Transverse colon (tissue), 4 donors: ENCODE measurements at regions of chr9 and their contacts with region 1.

Region 1: DNA sequence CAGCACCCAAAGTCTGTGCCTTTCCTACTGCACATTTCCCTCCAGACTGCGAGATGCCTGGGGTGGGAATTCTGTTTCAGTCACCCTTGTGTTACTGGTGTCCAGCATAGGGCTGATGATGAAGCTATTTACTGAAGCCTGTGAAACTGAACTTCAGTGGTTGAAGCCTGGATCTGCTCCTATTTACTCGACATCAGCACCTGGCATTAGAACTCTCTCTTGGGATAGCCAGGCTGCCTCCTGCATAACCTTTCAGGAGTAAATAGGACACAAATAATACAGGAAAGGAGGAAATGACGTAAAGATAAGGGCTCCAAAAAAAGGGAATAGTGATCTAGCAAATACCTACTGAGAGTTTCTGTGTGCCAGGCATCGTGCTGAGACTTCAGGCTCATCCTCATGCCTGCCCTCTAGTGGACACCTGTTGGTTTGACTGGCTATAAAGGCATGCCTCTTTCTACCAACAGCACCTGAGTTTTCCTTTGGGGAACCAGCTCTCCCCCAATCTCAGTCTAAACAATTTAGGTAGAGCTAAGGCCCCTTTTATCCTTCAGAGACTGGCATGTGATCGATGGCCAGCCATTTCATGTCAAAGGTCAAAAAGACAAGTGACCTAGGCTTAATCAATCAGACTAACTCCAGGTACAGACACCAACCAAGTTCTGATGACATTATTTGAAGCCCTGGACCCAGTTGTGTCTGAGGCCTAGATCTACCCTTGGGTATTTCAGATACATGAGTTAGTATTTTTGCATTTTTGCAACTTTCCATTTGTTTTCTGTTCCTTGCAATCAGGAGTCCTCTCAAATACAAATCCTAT is 192.1 kb upstream of the TRIM32 start:
- DNase-seq: peak; percentile 30
- H3K4me3 ChIP-seq: no peak overlapping the region
- H3K27ac ChIP-seq: no peak overlapping the region
- H3K4me1 ChIP-seq: peaks cover 0 to 15% (median 5%) of the 10 kb centered on the region in 4 donors
- H3K27me3 ChIP-seq: no peaks in the 10 kb centered on the region
- CTCF ChIP-seq: peak; percentile 52 to 64 (median 58)
- EP300 ChIP-seq: no peak
- POLR2A ChIP-seq: no peak

Region 2: DNA sequence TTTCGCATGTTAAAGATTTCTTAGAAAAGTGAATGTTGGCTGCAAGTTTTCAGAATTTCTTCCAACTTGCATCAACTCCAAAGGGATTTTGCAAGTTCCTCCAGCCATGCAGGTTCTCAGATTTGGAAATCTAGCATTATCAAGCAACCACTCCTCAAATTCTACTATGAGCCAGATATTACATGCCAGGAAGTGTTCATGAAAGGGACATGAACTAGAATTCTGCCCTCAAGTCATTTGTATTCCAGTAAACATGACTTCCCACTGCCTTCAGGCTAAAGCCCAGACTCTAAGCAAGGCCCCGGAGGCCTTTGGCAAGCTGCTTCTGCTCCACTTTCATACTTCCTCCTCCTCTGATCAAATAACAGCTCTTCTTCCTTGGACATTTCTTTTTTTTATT is 452.7 kb before region 1 on chr9:
- in situ Hi-C with region 1: no loop called
- intact Hi-C with region 1: no loop called
- DNase-seq: no peak
- H3K4me3 ChIP-seq: no peak overlapping the region
- H3K27ac ChIP-seq: no peak overlapping the region
- H3K4me1 ChIP-seq: no peaks in the 10 kb centered on the region
- H3K27me3 ChIP-seq: no peaks in the 10 kb centered on the region
- CTCF ChIP-seq: no peak
- EP300 ChIP-seq: no peak
- POLR2A ChIP-seq: no peak

Region 3: GRCh38 chr9:116566677-116567488 is 71.9 kb after region 1 on chr9:
- in situ Hi-C with region 1: no loop called
- intact Hi-C with region 1: loop called (anchors 10 kb)
- DNase-seq: no peak
- H3K4me3 ChIP-seq: no peak overlapping the region
- H3K27ac ChIP-seq: peak overlapping the region in 2 of 4 donors; percentile 33 to 48
- H3K4me1 ChIP-seq: peaks cover 0 to 15% (median 14%) of the 10 kb centered on the region in 4 donors
- H3K27me3 ChIP-seq: no peaks in the 10 kb centered on the region
- CTCF ChIP-seq: no peak
- EP300 ChIP-seq: no peak
- POLR2A ChIP-seq: no peak